ENCODE measurements at regions of chr5 and their contacts with region 1.

Region 1: DNA sequence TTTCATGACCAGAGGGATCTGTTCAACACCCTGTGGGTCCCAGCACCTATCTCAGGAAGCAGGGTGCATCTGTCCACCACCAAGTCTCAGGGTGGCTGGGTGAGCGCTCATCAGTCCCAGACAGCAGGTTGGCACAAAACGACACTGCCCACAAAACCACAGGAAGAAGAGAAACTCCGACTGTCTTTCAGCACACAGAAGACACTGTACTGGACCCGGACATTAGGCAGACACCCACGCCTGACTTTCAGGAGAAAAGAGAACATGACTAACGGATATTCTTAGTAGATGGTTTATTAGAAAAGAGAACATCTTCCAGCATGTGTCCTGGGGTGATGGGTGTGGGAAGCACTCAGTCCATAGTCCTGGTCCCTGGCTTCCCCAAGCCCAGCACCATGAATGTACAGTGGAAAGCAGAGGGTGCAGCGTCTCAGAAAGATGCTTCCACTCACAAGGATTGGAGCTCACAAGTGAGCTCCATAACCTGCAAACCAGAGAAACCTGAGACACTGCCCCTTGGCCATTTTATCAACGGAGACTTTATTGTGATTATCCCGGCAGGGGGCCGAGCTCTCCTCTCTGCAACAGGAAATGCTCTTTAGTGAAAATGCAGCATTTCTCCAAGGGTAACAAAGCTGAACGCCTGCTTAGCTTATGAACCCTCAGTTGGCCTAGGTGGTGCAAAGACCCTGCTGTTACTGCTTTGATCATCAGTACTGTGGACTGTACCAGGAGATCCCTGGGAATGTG is 35.8 kb upstream of the LCP2 start:
- DNase-seq: no peak
- H3K4me3 ChIP-seq: no peak overlapping the region
- H3K27ac ChIP-seq: no peak overlapping the region
- H3K4me1 ChIP-seq: peaks cover 14% of the 10 kb centered on the region
- H3K27me3 ChIP-seq: peaks cover 0 to 2% of the 10 kb centered on the region in 2 experiments
- CTCF ChIP-seq: no peak
- POLR2A ChIP-seq: no peak

Region 2: GRCh38 chr5:170466988-170467707 is 133.8 kb after region 1 on chr5:
- CTCF ChIA-PET with region 1: no interaction called
- POLR2A ChIA-PET with region 1: no interaction called
- dilution Hi-C with region 1: no loop called
- intact Hi-C with region 1: no loop called
- DNase-seq: peak; percentile 91
- H3K4me3 ChIP-seq: no peak overlapping the region
- H3K27ac ChIP-seq: peak overlapping the region; percentile 77
- H3K4me1 ChIP-seq: peaks cover 33% of the 10 kb centered on the region
- H3K27me3 ChIP-seq: no peaks in the 10 kb centered on the region
- CTCF ChIP-seq: no peak
- POLR2A ChIP-seq: no peak

Region 3: DNA sequence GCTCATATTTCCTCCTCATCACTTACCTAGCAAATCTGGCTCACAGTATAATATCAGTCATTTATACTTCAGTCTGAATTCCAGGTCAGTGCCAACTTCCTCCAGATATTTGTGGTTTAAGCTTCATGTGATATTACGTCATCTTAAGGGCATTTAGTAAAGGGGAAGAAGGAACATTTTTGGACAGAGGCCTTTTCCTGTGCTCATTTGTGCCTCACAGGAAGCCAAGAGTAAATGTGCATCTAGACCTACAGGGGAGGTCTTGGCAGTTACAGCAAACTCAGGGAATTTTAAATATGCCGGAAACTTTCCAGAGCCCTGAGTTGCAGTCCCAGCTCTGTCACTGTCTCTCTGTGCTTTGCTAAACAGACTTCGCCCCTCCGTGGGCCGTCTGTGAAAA is 158.1 kb after region 1 on chr5:
- CTCF ChIA-PET with region 1: no interaction called
- POLR2A ChIA-PET with region 1: no interaction called
- dilution Hi-C with region 1: no loop called
- intact Hi-C with region 1: loop called (anchors 1 kb)
- DNase-seq: peak; percentile 91
- H3K4me3 ChIP-seq: no peak overlapping the region
- H3K27ac ChIP-seq: peak overlapping the region; percentile 75
- H3K4me1 ChIP-seq: peaks cover 15% of the 10 kb centered on the region
- H3K27me3 ChIP-seq: no peaks in the 10 kb centered on the region
- CTCF ChIP-seq: no peak
- POLR2A ChIP-seq: peak; percentile 25

Measured in endothelial cell of umbilical vein (primary cell).